A549 (cell line): ENCODE measurements at regions of chr17 and their contacts with region 1.

Region 1: GRCh38 chr17:73192894-73193701 is at the start of gene COG1:
- DNase-seq: peak; percentile 91 to 96
- ATAC-seq: peak; percentile 72 to 80
- H3K4me3 ChIP-seq: peak within 1 kb of the TSS; percentile 79
- H3K27ac ChIP-seq: peak within 1 kb of the TSS; percentile 88 to 94
- H3K4me1 ChIP-seq: peaks cover 8% of the 10 kb centered on the region; the same call in 1 of the 3 replicates
- CTCF ChIP-seq: no peak
- EP300 ChIP-seq: no peak
- POLR2A ChIP-seq: peak; percentile 74
- RAD21 ChIP-seq: no peak
- polyA plus RNA-seq, gene COG1: 26.0 and 30.6 TPM in 2 replicates

Region 2: GRCh38 chr17:72715906-72716572 is 477.1 kb before region 1 on chr17:
- CTCF ChIA-PET with region 1: interaction called, 41 read pairs
- POLR2A ChIA-PET with region 1: no interaction called
- DNase-seq: peak; percentile 93 to 97
- ATAC-seq: peak; percentile 86 to 89
- H3K4me3 ChIP-seq: no peak overlapping the region
- H3K27ac ChIP-seq: peak overlapping the region; percentile 84 to 85
- H3K4me1 ChIP-seq: peaks cover 41% of the 10 kb centered on the region
- CTCF ChIP-seq: no peak
- EP300 ChIP-seq: peak; percentile 97 to 98
- POLR2A ChIP-seq: no peak
- RAD21 ChIP-seq: peak; percentile 52 to 70; a peak in 4 of 5 replicates

Region 3: DNA sequence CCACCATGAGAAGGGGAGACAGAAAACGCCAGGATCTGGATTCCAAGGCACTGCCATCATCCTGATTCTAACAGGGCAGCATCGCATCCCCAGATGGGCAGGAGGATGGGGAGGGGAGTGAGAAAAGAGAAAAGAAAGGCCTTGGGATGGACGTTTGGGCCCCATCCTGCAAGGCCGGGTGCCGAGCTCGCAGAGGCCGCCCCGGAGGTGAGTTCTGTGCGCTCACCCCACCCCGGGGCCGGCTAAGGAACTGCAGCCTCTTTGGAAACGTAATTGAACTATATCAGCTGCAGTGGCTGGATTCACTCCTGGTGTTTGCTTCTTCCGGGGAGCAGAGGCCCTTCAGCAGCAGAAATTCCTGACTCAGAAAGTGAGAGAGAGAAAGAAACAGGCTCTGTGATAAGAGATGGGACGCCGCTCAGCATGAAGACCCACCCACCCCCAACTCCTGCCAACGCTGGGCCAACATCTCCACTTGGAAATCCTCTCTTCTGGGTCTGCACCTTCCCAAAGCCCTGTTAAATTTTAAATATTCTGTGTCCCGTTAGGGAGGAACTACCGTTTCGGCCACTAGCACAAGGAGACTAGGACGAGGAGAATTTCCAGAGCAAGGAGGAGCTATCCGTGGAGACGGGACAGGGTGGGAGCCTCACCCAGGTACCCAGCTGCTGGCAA is 36.8 kb before region 1 on chr17:
- CTCF ChIA-PET with region 1: interaction called, 23 read pairs
- POLR2A ChIA-PET with region 1: no interaction called
- DNase-seq: peak; percentile 66 to 88
- ATAC-seq: peak; percentile 97 to 98
- H3K4me3 ChIP-seq: no peak overlapping the region
- H3K27ac ChIP-seq: peak overlapping the region in 1 of 2 experiments; percentile 50; a peak in 2 of 6 replicates
- H3K4me1 ChIP-seq: peaks cover 15% of the 10 kb centered on the region
- CTCF ChIP-seq: peak; percentile 67
- EP300 ChIP-seq: no peak
- POLR2A ChIP-seq: no peak
- RAD21 ChIP-seq: peak; percentile 81 to 84

Region 4: DNA sequence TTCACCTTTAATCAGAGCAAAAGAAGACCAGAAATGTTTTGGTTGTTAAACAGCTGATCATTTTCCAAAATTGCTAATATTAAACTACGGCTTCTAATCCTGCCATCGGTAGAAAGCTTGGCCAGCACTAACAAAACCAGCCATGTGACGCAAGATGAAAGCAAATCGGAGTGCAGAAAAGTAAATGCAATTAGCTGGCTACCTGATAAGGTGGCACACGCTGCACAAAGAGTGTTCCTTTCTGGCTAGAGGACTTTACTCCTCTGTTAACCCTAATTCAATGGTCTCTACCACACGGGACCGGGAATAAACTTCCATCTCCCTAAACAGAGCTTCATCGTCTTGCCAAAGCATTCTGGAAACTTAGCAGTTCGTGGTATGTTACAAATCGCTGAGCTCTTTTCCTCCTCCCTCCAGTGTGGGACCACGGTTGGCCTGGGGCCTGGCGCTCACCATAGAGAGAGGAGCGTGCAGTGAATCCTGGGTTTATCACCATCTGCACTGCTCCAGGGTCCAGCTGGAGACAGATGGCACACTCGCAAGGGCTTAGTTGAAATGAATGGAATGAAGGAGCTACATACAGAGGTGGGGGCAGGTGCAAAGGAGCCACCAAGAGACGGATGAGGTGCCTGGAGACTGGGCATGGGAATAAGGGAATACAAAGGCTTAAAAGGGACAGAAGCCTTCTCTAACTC is 10.3 kb before region 1 on chr17:
- CTCF ChIA-PET with region 1: interaction called, 50 read pairs
- POLR2A ChIA-PET with region 1: interaction called, 3 read pairs
- DNase-seq: no peak
- ATAC-seq: no peak
- H3K4me3 ChIP-seq: no peak overlapping the region
- H3K27ac ChIP-seq: no peak overlapping the region
- H3K4me1 ChIP-seq: peaks cover 7% of the 10 kb centered on the region; the same call in 1 of the 3 replicates
- CTCF ChIP-seq: no peak
- EP300 ChIP-seq: no peak
- POLR2A ChIP-seq: no peak
- RAD21 ChIP-seq: no peak

Region 5: GRCh38 chr17:73208139-73208827 is 15.2 kb after region 1 on chr17:
- CTCF ChIA-PET with region 1: interaction called, 23 read pairs
- POLR2A ChIA-PET with region 1: no interaction called
- DNase-seq: no peak
- ATAC-seq: no peak
- H3K4me3 ChIP-seq: no peak overlapping the region
- H3K27ac ChIP-seq: no peak overlapping the region
- H3K4me1 ChIP-seq: no peaks in the 10 kb centered on the region
- CTCF ChIP-seq: no peak
- EP300 ChIP-seq: no peak
- POLR2A ChIP-seq: no peak
- RAD21 ChIP-seq: no peak

Region 6: DNA sequence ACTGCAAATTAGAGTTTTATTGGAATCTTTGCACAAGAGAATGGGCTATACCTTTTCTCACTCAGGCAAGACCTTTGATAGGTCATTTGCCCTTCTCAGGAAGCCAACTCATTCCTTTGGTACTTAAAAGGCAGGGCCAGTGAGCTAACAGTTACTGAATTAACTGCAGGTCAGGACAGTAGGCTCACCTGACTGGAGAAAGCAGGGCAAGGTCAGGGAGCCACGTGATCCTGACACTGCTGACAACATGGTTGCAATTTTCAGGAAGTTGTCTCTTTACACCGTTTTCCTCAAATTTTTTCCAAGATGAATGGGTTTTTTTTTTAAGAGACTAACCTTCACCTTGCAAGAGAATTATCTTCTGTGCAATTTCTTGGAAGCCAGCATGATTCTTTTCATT is 47.5 kb after region 1 on chr17:
- CTCF ChIA-PET with region 1: interaction called, 12 read pairs
- POLR2A ChIA-PET with region 1: no interaction called
- DNase-seq: no peak
- ATAC-seq: no peak
- H3K4me3 ChIP-seq: no peak overlapping the region
- H3K27ac ChIP-seq: no peak overlapping the region
- H3K4me1 ChIP-seq: no peaks in the 10 kb centered on the region
- CTCF ChIP-seq: no peak
- EP300 ChIP-seq: no peak
- POLR2A ChIP-seq: no peak
- RAD21 ChIP-seq: no peak